A673 (cell line): ENCODE measurements at regions of chr2 and their contacts with region 1.

Region 1: DNA sequence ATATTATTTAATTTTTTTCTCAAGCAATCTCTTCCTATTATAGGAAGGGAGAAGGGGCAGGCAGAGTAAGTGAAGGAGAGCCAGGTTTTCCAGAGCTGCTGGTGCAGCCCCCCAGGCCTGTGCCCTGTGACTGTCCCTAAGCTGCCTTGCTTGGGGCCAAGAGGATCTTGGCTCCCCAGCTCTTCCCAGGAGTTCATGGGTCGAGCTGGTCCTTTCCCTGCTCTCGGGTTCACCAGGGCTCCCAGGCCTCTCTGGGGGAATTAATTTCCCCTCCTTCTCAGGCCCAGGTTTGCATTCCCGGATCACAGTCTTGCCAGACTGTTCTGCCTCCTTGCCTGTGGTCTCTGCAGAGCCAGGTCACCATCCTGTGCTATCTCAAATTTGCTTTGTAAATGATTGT is 12.7 kb upstream of the TMEM131 start:
- DNase-seq: no peak
- H3K4me3 ChIP-seq: no peak overlapping the region
- H3K27ac ChIP-seq: no peak overlapping the region
- H3K4me1 ChIP-seq: no peaks in the 10 kb centered on the region
- H3K27me3 ChIP-seq: no peaks in the 10 kb centered on the region
- CTCF ChIP-seq: no peak

Region 2: DNA sequence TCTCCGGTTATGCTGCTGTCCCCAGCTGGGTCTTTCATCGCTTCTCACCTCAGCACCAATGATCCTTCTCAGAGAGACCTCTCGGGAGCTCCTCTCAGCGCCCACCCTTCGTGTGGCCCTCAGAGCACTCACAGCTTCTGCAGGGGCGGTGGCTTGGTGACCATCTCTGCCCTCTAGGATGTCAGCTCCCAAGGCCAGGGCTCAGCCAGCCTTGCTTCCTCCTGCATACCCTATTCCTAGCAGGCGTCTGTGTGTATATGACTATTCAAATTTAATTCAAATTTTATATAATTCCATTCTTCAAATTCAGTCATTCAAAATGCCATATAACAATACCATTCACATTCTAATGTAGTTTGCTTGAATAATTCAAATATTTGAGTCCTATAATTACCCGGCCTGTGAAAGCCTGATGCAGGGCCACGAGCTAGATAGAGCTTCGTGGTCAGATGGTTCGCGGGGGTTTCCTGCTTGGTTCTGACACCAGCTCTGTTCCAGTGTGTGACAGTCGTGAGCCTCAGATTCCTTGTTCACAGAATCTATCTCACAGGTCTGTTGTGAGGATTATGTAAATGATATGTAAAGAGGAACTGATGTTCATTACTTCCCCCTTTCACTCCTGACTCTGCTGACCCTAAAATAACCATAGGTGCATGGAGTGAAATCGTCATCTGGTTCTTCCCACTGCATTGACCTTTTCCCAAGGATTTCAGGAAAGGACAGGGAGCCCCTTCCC is 243.8 kb after region 1 on chr2:
- CTCF ChIA-PET with region 1: no interaction called
- POLR2A ChIA-PET with region 1: no interaction called
- intact Hi-C with region 1: no loop called
- DNase-seq: no peak
- H3K4me3 ChIP-seq: no peak overlapping the region
- H3K27ac ChIP-seq: no peak overlapping the region
- H3K4me1 ChIP-seq: no peaks in the 10 kb centered on the region
- H3K27me3 ChIP-seq: peaks cover 8% of the 10 kb centered on the region
- CTCF ChIP-seq: no peak

Region 3: DNA sequence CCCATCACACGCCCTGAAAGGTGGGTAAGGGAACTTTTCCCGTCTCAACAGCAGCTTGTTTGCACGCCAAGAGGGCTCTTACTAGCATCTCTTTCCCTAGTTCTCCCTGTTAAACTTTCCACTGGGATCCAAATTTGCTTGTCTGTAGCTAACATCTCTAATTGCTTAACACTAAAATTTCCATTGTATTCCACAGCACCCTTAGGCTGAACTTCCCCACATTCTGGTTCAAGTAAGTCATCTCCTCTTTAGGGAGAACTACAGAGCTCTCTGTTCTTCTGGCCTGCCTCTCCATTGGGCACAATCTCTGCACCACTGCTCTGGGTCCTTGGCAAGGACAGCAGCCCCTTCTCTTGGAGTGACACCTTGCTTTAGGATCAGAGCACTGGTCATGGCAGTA is 623.9 kb after region 1 on chr2:
- CTCF ChIA-PET with region 1: no interaction called
- POLR2A ChIA-PET with region 1: interaction called, 14 read pairs
- intact Hi-C with region 1: no loop called
- DNase-seq: no peak
- H3K4me3 ChIP-seq: no peak overlapping the region
- H3K27ac ChIP-seq: no peak overlapping the region
- H3K4me1 ChIP-seq: no peaks in the 10 kb centered on the region
- H3K27me3 ChIP-seq: no peaks in the 10 kb centered on the region
- CTCF ChIP-seq: no peak